Activated CD4-positive, alpha-beta memory T cell treated with anti-CD3 and anti-CD28 coated beads for 36 hours (primary cell): ENCODE measurements at regions of chr18 and their contacts with region 1.

Region 1: DNA sequence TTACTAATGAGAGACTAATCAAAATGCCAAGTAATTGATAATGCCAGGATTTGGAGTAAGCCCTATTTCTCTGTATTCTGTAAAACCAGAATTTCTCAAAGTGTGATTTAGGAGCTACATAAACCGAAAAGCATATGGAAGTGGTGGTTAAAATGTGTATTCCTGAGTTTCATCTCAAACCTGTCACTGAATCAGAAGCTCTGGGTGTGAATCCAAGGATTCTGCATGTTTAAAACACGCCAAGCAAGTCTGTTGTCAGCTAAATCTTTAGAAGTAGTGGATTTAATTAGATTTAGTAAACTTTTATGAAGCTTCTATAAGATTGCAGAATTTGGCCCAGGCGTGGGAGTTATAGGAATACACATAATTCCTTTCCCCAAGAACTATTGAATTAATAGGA is 700.3 kb downstream of the DCC start:
- DNase-seq: no peak
- H3K4me3 Mint-ChIP-seq: no peak overlapping the region
- H3K27ac Mint-ChIP-seq: no peak overlapping the region
- H3K4me1 Mint-ChIP-seq: no peaks in the 10 kb centered on the region
- H3K27me3 Mint-ChIP-seq: no peaks in the 10 kb centered on the region

Region 2: GRCh38 chr18:52995875-52996274 is 44.4 kb before region 1 on chr18:
- CTCF ChIA-PET with region 1: no interaction called
- POLR2A ChIA-PET with region 1: no interaction called
- intact Hi-C with region 1: loop called (anchors 5 kb)
- DNase-seq: no peak
- H3K4me3 Mint-ChIP-seq: no peak overlapping the region
- H3K27ac Mint-ChIP-seq: no peak overlapping the region
- H3K4me1 Mint-ChIP-seq: no peaks in the 10 kb centered on the region
- H3K27me3 Mint-ChIP-seq: no peaks in the 10 kb centered on the region

Region 3: GRCh38 chr18:53142005-53142404 is 101.7 kb after region 1 on chr18:
- CTCF ChIA-PET with region 1: no interaction called
- POLR2A ChIA-PET with region 1: no interaction called
- intact Hi-C with region 1: no loop called
- DNase-seq: no peak
- H3K4me3 Mint-ChIP-seq: no peak overlapping the region
- H3K27ac Mint-ChIP-seq: no peak overlapping the region
- H3K4me1 Mint-ChIP-seq: no peaks in the 10 kb centered on the region
- H3K27me3 Mint-ChIP-seq: no peaks in the 10 kb centered on the region